CD4-positive, alpha-beta memory T cell (primary cell): ENCODE measurements at regions of chr12 and their contacts with region 1.

Region 1: GRCh38 chr12:120292661-120293531 is at the start of gene RNU4-1:
- DNase-seq: peak; percentile 87 to 93 (median 91)
- H3K4me3 ChIP-seq: peak within 1 kb of the TSS; percentile 86 to 96
- H3K4me3 Mint-ChIP-seq: no peak within 1 kb of the TSS
- H3K27ac ChIP-seq: peak within 1 kb of the TSS; percentile 99
- H3K27ac Mint-ChIP-seq: no peak within 1 kb of the TSS
- H3K4me1 ChIP-seq: peaks cover 18% of the 10 kb centered on the region
- H3K4me1 Mint-ChIP-seq: peaks cover 6 to 13% (median 8%) of the 10 kb centered on the region in 4 donors
- H3K27me3 ChIP-seq: no peaks in the 10 kb centered on the region
- H3K27me3 Mint-ChIP-seq: no peaks in the 10 kb centered on the region
- total RNA-seq, gene RNU4-1: 925 to 1,200 TPM

Region 2: GRCh38 chr12:120012067-120012621 is 280.8 kb before region 1 on chr12:
- CTCF ChIA-PET with region 1: no interaction called
- POLR2A ChIA-PET with region 1: interaction called, 11 read pairs
- intact Hi-C with region 1: no loop called
- DNase-seq: peak; percentile 82 to 99 (median 88)
- H3K4me3 ChIP-seq: peak overlapping the region; percentile 1 to 22
- H3K4me3 Mint-ChIP-seq: peak overlapping the region; percentile 63 to 89 (median 80)
- H3K27ac ChIP-seq: peak overlapping the region; percentile 95
- H3K27ac Mint-ChIP-seq: peak overlapping the region; percentile 95 to 100 (median 99)
- H3K4me1 ChIP-seq: peaks cover 81% of the 10 kb centered on the region
- H3K4me1 Mint-ChIP-seq: peaks cover 58 to 88% (median 67%) of the 10 kb centered on the region in 4 donors
- H3K27me3 ChIP-seq: no peaks in the 10 kb centered on the region
- H3K27me3 Mint-ChIP-seq: no peaks in the 10 kb centered on the region

Region 3: GRCh38 chr12:120116792-120117651 is 175.9 kb before region 1 on chr12:
- CTCF ChIA-PET with region 1: no interaction called
- POLR2A ChIA-PET with region 1: interaction called, 34 read pairs
- intact Hi-C with region 1: no loop called
- DNase-seq: peak; percentile 95 to 99 (median 97)
- H3K4me3 ChIP-seq: peak overlapping the region; percentile 75 to 80
- H3K4me3 Mint-ChIP-seq: peak overlapping the region; percentile 86 to 98 (median 90)
- H3K27ac ChIP-seq: peak overlapping the region; percentile 83
- H3K27ac Mint-ChIP-seq: peak overlapping the region; percentile 85 to 99 (median 94)
- H3K4me1 ChIP-seq: peaks cover 84% of the 10 kb centered on the region
- H3K4me1 Mint-ChIP-seq: peaks cover 59 to 88% (median 76%) of the 10 kb centered on the region in 4 donors
- H3K27me3 ChIP-seq: no peaks in the 10 kb centered on the region
- H3K27me3 Mint-ChIP-seq: no peaks in the 10 kb centered on the region

Region 4: GRCh38 chr12:120228291-120229070 is 64.4 kb before region 1 on chr12:
- CTCF ChIA-PET with region 1: interaction called, 33 read pairs
- POLR2A ChIA-PET with region 1: interaction called, 177 read pairs
- intact Hi-C with region 1: loop called (anchors 1 kb)
- DNase-seq: peak; percentile 84 to 87 (median 86)
- H3K4me3 ChIP-seq: peak overlapping the region in 1 of 2 donors; percentile 3
- H3K4me3 Mint-ChIP-seq: peak overlapping the region; percentile 65 to 84 (median 70)
- H3K27ac ChIP-seq: peak overlapping the region; percentile 43
- H3K27ac Mint-ChIP-seq: peak overlapping the region; percentile 29 to 94 (median 86)
- H3K4me1 ChIP-seq: peaks cover 85% of the 10 kb centered on the region
- H3K4me1 Mint-ChIP-seq: peaks cover 59 to 86% (median 75%) of the 10 kb centered on the region in 4 donors
- H3K27me3 ChIP-seq: no peaks in the 10 kb centered on the region
- H3K27me3 Mint-ChIP-seq: no peaks in the 10 kb centered on the region

Region 5: DNA sequence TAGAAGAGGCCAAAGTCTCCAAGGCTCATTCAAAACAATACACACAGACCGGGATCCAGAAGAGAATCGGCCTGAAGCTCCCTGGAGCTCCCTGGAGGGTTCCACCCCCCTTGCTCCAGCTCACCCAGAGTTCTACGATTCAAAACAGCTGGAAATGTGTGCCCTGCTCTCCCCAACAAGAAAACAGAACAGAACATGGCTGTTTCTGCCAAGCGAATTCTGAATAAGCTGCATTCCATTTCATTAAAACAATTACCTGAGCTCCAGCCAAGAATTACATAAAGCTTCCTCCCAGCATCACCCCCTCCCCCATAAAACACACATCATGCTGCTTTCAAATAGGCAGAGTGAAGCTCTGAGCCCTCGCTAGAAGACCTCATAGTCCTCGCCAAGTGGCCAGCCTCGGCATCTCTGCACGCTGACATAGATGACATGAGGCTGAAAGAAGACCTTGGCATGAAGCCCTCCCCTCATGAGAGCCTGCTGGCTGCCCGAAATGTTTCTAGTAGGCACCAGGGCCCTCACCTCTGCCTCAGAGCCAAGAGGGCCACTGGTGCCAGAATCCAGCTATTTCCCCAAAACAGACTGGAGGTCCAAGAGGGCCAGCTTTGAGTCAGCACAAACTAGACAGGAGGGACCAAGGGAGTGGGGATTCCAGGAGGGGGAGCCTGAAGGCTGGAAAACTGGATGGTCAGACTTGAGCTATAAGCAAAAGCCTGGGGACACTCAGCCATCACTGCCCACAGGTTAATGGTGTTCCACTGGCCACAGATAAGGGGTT is 35.7 kb before region 1 on chr12:
- CTCF ChIA-PET with region 1: interaction called, 5 read pairs
- POLR2A ChIA-PET with region 1: interaction called, 176 read pairs
- intact Hi-C with region 1: loop called (anchors 1 kb)
- DNase-seq: no peak
- H3K4me3 ChIP-seq: no peak overlapping the region
- H3K4me3 Mint-ChIP-seq: peak overlapping the region in 7 of 8 donors; percentile 20 to 71 (median 41)
- H3K27ac ChIP-seq: no peak overlapping the region
- H3K27ac Mint-ChIP-seq: peak overlapping the region; percentile 77 to 96 (median 91)
- H3K4me1 ChIP-seq: peaks cover 100% of the 10 kb centered on the region
- H3K4me1 Mint-ChIP-seq: peaks cover 64 to 94% (median 82%) of the 10 kb centered on the region in 4 donors
- H3K27me3 ChIP-seq: no peaks in the 10 kb centered on the region
- H3K27me3 Mint-ChIP-seq: no peaks in the 10 kb centered on the region

Region 6: DNA sequence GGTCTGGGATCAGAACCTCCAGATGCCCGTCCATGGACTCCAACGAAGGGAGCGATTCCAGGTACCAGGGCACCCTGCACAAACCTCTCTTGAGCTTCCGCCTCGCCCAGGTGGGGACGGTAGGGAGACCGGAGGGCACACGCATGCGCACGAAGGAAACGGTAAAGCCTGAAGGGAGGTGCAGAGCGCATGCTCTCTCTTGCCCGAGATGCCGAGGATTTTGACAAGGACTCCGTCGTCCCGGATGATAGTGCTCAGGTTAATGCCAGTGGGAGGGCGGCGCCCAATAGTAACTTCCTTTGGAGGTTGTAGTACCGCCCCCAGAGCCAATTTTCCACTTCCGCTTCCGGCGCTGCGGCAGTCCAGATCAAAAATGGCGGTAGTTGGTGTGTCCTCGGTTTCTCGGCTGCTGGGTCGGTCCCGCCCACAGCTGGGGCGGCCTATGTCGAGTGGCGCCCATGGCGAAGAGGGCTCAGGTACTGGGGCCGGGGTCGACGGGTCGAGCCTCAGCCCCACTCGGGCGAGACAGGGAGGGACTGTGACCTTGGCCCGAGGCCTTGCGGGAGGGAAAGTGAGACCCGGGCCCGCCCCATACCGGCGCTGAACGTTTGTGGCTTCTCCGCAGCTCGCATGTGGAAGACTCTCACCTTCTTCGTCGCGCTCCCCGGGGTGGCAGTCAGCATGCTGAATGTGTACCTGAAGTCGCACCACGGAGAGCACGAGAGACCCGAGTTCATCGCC is 145.0 kb after region 1 on chr12 and contains the start of gene COX6A1:
- CTCF ChIA-PET with region 1: interaction called, 5 read pairs
- POLR2A ChIA-PET with region 1: interaction called, 29 read pairs
- intact Hi-C with region 1: loop called (anchors 5 kb)
- DNase-seq: peak; percentile 94 to 99 (median 98)
- H3K4me3 ChIP-seq: peak within 1 kb of the TSS; percentile 52 to 70
- H3K4me3 Mint-ChIP-seq: peak within 1 kb of the TSS; percentile 92 to 99 (median 96)
- H3K27ac ChIP-seq: peak within 1 kb of the TSS; percentile 76
- H3K27ac Mint-ChIP-seq: peak within 1 kb of the TSS; percentile 86 to 99 (median 96)
- H3K4me1 ChIP-seq: peaks cover 26% of the 10 kb centered on the region
- H3K4me1 Mint-ChIP-seq: peaks cover 18 to 31% (median 27%) of the 10 kb centered on the region in 4 donors
- H3K27me3 ChIP-seq: no peaks in the 10 kb centered on the region
- H3K27me3 Mint-ChIP-seq: peaks cover under 1 to 3% of the 10 kb centered on the region in 2 donors
- total RNA-seq, gene COX6A1: 144 to 158 TPM

Region 7: GRCh38 chr12:120791669-120792176 is 498.8 kb after region 1 on chr12:
- CTCF ChIA-PET with region 1: no interaction called
- POLR2A ChIA-PET with region 1: no interaction called
- intact Hi-C with region 1: no loop called
- DNase-seq: no peak
- H3K4me3 ChIP-seq: no peak overlapping the region
- H3K4me3 Mint-ChIP-seq: no peak overlapping the region
- H3K27ac ChIP-seq: no peak overlapping the region
- H3K27ac Mint-ChIP-seq: peak overlapping the region in 3 of 7 donors; percentile 32 to 77 (median 44)
- H3K4me1 ChIP-seq: no peaks in the 10 kb centered on the region
- H3K4me1 Mint-ChIP-seq: peaks cover 6 to 21% (median 16%) of the 10 kb centered on the region in 4 donors
- H3K27me3 ChIP-seq: no peaks in the 10 kb centered on the region
- H3K27me3 Mint-ChIP-seq: no peaks in the 10 kb centered on the region

Region 8: DNA sequence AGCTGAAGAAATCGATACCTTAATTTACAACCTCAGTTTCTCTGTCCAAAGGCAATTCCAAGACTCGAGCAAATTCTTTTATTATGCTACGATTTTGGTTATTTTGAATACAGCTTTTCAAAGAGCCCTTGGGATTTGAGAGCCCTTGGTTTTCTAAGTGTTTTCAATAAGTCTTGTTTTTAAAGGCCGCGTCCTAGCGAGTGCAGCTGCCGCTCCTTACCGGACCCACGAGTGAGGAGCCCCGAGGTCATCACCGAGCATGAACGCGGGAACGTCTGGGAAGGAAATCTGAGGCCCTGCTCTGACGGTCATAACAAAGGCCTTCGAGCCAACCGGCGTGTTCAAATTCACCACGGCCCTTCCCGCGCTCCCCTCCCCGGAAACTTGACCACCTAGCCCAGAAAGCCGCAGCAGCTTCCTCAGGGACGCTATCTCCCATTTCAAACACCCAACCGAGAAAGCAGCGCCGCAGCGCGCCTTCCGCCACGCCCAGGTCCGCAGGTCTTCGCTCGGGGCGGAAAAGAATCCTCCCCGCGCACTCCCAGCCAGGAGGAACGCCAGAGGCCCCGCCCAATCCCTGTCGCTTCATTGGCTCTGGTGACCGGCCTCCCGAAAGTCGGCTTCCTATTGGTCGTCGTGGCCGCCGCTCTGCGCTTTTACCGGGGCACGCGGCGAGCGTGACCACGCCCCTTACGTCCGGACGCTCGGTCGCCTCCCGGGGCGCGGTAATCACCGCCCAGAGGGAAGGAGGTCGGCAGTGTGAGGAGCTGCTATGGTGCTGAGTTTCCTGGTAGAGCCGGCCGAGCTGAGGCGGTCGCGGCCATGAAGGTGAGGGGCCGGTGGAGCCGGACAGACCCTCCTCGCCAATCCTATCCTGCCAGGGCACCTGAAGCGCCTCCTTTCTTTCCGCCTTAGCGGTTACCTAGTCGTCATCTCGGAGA is 1106.8 kb after region 1 on chr12 and contains the start of gene RNF34:
- CTCF ChIA-PET with region 1: no interaction called
- POLR2A ChIA-PET with region 1: interaction called, 10 read pairs
- intact Hi-C with region 1: no loop called
- DNase-seq: peak; percentile 96 to 98 (median 97)
- H3K4me3 ChIP-seq: peak within 1 kb of the TSS; percentile 25 to 78
- H3K4me3 Mint-ChIP-seq: peak within 1 kb of the TSS; percentile 89 to 99 (median 94)
- H3K27ac ChIP-seq: peak within 1 kb of the TSS; percentile 87
- H3K27ac Mint-ChIP-seq: peak within 1 kb of the TSS; percentile 95 to 98 (median 96)
- H3K4me1 ChIP-seq: peaks cover 42% of the 10 kb centered on the region
- H3K4me1 Mint-ChIP-seq: peaks cover 21 to 47% (median 32%) of the 10 kb centered on the region in 4 donors
- H3K27me3 ChIP-seq: no peaks in the 10 kb centered on the region
- H3K27me3 Mint-ChIP-seq: no peaks in the 10 kb centered on the region
- total RNA-seq, gene RNF34: 88.6 to 95.3 TPM